T-cell (primary cell): ENCODE measurements at regions of chr17 and their contacts with region 1.

Region 1: DNA sequence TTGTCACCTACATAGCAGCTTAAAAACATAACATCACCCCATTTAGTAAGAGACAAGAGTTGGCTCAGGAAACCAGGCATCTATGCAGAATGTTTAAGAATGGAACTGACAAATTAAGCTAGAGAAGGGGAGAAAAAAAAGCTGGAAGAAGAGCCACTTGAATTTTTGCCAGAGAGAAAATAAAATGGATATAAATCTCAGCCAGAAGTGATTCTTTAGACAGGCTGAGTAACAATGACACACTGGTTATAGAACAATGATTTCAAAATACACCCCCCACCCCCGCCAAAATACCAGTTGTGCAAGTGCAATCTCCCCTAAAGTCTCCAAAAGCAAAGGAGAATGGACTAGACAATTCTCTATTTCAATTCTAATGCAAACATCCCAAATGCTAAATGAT is 22.4 kb downstream of the LSM12 start:
- DNase-seq: no peak
- ATAC-seq: no peak
- H3K4me3 ChIP-seq: no peak overlapping the region
- H3K4me3 Mint-ChIP-seq: no peak overlapping the region
- H3K27ac ChIP-seq: no peak overlapping the region
- H3K27ac Mint-ChIP-seq: no peak overlapping the region
- H3K4me1 ChIP-seq: no peaks in the 10 kb centered on the region
- H3K4me1 Mint-ChIP-seq: peaks cover 8 to 18% (median 18%) of the 10 kb centered on the region in 3 donors
- H3K27me3 ChIP-seq: no peaks in the 10 kb centered on the region
- H3K27me3 Mint-ChIP-seq: no peaks in the 10 kb centered on the region

Region 2: DNA sequence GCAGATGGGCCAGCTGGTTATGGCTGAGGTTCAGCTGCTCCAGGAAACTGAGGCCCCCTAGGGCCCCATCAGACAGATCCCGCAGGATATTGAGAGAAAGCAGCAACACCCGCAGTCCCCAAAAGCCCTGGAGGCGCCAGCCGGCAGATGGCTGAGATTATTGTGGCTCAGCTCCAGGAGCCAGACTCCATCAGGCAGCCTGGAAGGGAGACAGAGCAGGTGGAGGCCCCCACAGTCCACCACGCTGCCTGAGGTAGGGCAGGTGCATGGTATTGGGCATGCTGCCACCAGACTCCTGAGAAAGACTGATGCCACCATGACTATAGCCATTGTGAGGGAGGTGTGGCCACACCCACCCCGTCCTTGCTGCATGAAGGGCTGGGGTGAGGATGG is 19.8 kb before region 1 on chr17:
- CTCF ChIA-PET with region 1: interaction called in 1 of 2 experiments, 10 read pairs
- POLR2A ChIA-PET with region 1: interaction called in 1 of 2 experiments, 4 read pairs
- DNase-seq: no peak
- ATAC-seq: no peak
- H3K4me3 ChIP-seq: no peak overlapping the region
- H3K4me3 Mint-ChIP-seq: no peak overlapping the region
- H3K27ac ChIP-seq: no peak overlapping the region
- H3K27ac Mint-ChIP-seq: no peak overlapping the region
- H3K4me1 ChIP-seq: no peaks in the 10 kb centered on the region
- H3K4me1 Mint-ChIP-seq: no peaks in the 10 kb centered on the region
- H3K27me3 ChIP-seq: no peaks in the 10 kb centered on the region
- H3K27me3 Mint-ChIP-seq: no peaks in the 10 kb centered on the region

Region 3: GRCh38 chr17:44077595-44077909 is 33.5 kb after region 1 on chr17:
- CTCF ChIA-PET with region 1: no interaction called
- POLR2A ChIA-PET with region 1: no interaction called
- DNase-seq: no peak
- ATAC-seq: no peak
- H3K4me3 ChIP-seq: no peak overlapping the region
- H3K4me3 Mint-ChIP-seq: no peak overlapping the region
- H3K27ac ChIP-seq: no peak overlapping the region
- H3K27ac Mint-ChIP-seq: peak overlapping the region in 1 of 2 donors; percentile 34
- H3K4me1 ChIP-seq: no peaks in the 10 kb centered on the region
- H3K4me1 Mint-ChIP-seq: peaks cover 2 to 6% (median 5%) of the 10 kb centered on the region in 3 donors
- H3K27me3 ChIP-seq: no peaks in the 10 kb centered on the region
- H3K27me3 Mint-ChIP-seq: no peaks in the 10 kb centered on the region